ENCODE measurements at regions of chr16 and their contacts with region 1.

Region 1: DNA sequence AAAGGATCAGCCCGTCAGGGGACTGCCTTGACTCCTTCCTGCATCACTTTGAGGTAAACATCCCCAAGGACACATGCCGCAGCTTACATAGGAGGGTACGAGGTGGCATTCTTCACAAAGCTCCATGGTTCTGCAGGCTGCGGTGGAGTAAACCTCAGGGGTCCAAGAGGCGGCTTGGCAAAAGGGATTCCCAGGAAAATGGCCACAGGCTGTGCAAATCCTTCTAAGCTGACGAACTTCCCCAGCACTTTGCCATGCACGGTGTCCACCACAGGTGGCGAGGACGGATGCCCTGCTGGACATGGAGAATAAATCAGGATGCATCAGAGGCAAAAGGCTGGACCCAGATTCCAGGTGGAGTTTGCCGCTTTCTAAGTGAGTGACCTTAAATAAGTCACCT is 4.2 kb downstream of the CES1 start:
- DNase-seq: no peak
- H3K4me3 ChIP-seq: no peak overlapping the region
- H3K4me3 Mint-ChIP-seq: no peak overlapping the region
- H3K27ac ChIP-seq: no peak overlapping the region
- H3K27ac Mint-ChIP-seq: no peak overlapping the region
- H3K4me1 ChIP-seq: peaks cover 16 to 22% of the 10 kb centered on the region in 2 donors
- H3K4me1 Mint-ChIP-seq: peaks cover 57% of the 10 kb centered on the region
- H3K27me3 ChIP-seq: peaks cover 0 to 3% of the 10 kb centered on the region in 2 donors
- H3K27me3 Mint-ChIP-seq: peaks cover 2 to 7% (median 6%) of the 10 kb centered on the region in 3 donors
- CTCF ChIP-seq: no peak

Region 2: DNA sequence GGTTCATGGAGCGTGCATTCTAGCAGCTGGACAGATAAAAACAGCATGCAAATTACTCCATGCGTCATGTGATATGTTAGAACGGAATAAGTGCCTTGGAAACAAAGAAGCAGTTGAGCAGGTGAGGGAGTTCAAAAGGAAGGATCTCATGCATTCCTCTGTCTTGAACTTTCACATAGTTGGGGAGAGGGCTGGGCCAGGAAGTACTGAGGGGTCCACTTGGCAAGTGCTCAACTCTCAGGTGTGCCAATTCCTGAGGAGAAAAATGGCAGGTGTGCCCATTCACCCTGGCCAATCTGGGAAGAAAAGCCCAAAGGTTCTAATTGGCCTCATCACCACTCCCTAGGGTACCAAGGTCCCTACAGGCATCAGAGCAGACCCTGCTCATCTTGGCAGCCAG is 63.5 kb before region 1 on chr16:
- intact Hi-C with region 1: loop called in 1 of 2 experiments (anchors 1 kb)
- DNase-seq: no peak
- H3K4me3 ChIP-seq: no peak overlapping the region
- H3K4me3 Mint-ChIP-seq: no peak overlapping the region
- H3K27ac ChIP-seq: no peak overlapping the region
- H3K27ac Mint-ChIP-seq: no peak overlapping the region
- H3K4me1 ChIP-seq: peaks cover 3 to 7% of the 10 kb centered on the region in 2 donors
- H3K4me1 Mint-ChIP-seq: peaks cover 4% of the 10 kb centered on the region
- H3K27me3 ChIP-seq: no peaks in the 10 kb centered on the region
- H3K27me3 Mint-ChIP-seq: peaks cover 9 to 22% (median 21%) of the 10 kb centered on the region in 3 donors
- CTCF ChIP-seq: no peak

Measured in CD14-positive monocyte (primary cell).